CD4-positive, alpha-beta T cell (primary cell): ENCODE measurements at regions of chr6 and their contacts with region 1.

Region 1: GRCh38 chr6:110958329-110959192 is at the start of gene GTF3C6:
- DNase-seq: peak; percentile 85 to 96 (median 90)
- ATAC-seq: peak; percentile 99
- H3K4me3 ChIP-seq: peak within 1 kb of the TSS; percentile 99
- H3K4me3 Mint-ChIP-seq: peak within 1 kb of the TSS; percentile 99
- H3K27ac ChIP-seq: peak within 1 kb of the TSS; percentile 84 to 90
- H3K27ac Mint-ChIP-seq: peak within 1 kb of the TSS; percentile 89
- H3K4me1 ChIP-seq: peaks cover 17% of the 10 kb centered on the region
- H3K4me1 Mint-ChIP-seq: peaks cover 25% of the 10 kb centered on the region
- H3K27me3 ChIP-seq: no peaks in the 10 kb centered on the region
- H3K27me3 Mint-ChIP-seq: peaks cover 2% of the 10 kb centered on the region
- CTCF ChIP-seq: no peak
- total RNA-seq, gene GTF3C6: 17.9 to 19.2 TPM

Region 2: DNA sequence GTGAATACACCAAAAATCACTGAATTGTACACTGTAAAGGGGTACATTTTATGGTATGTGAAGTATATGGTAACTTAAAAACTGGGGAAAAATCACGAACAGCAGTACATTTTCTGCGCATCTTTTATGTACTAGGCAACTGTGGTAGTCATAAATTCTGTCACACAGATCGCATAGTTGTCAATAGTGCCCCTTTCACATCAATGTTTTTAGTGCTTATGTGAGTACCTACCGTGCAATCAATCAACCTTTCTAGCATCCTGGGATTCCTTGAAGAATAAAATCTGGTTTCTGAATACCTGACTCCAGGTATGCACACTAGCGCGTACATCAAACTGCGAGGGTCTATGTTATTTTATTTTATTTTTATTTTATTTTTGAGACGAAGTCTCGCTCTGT is 22.6 kb after region 1 on chr6:
- CTCF ChIA-PET with region 1: interaction called, 4 read pairs
- POLR2A ChIA-PET with region 1: interaction called, 53 read pairs
- intact Hi-C with region 1: loop called (anchors 1 kb)
- DNase-seq: peak in 1 of 14 experiments; percentile 43
- ATAC-seq: peak; percentile 1
- H3K4me3 ChIP-seq: peak overlapping the region; percentile 99
- H3K4me3 Mint-ChIP-seq: peak overlapping the region; percentile 99
- H3K27ac ChIP-seq: peak overlapping the region; percentile 77 to 97
- H3K27ac Mint-ChIP-seq: peak overlapping the region; percentile 99
- H3K4me1 ChIP-seq: peaks cover 14% of the 10 kb centered on the region
- H3K4me1 Mint-ChIP-seq: peaks cover 49% of the 10 kb centered on the region
- H3K27me3 ChIP-seq: no peaks in the 10 kb centered on the region
- H3K27me3 Mint-ChIP-seq: no peaks in the 10 kb centered on the region
- CTCF ChIP-seq: no peak